A549 (cell line): ENCODE measurements at regions of chr12 and their contacts with region 1.

Region 1: GRCh38 chr12:57452937-57453509 is 2.1 kb upstream of the INHBE start:
- DNase-seq: peak; percentile 65 to 84
- ATAC-seq: peak; percentile 54 to 74
- H3K4me3 ChIP-seq: no peak overlapping the region
- H3K27ac ChIP-seq: peak overlapping the region; percentile 92 to 99
- H3K4me1 ChIP-seq: peaks cover 68% of the 10 kb centered on the region
- CTCF ChIP-seq: peak; percentile 94
- EP300 ChIP-seq: no peak
- POLR2A ChIP-seq: no peak
- RAD21 ChIP-seq: peak; percentile 98 to 99

Region 2: GRCh38 chr12:57213058-57213715 is 239.8 kb before region 1 on chr12:
- CTCF ChIA-PET with region 1: interaction called, 51 read pairs
- POLR2A ChIA-PET with region 1: no interaction called
- DNase-seq: peak; percentile 89 to 94
- ATAC-seq: peak; percentile 51 to 75
- H3K4me3 ChIP-seq: no peak overlapping the region
- H3K27ac ChIP-seq: peak overlapping the region in 1 of 2 experiments; percentile 67; a peak in 4 of 6 replicates
- H3K4me1 ChIP-seq: peaks cover 31% of the 10 kb centered on the region
- CTCF ChIP-seq: peak; percentile 90
- EP300 ChIP-seq: no peak
- POLR2A ChIP-seq: no peak
- RAD21 ChIP-seq: peak; percentile 78 to 85

Region 3: GRCh38 chr12:57280211-57281062 is 172.6 kb before region 1 on chr12:
- CTCF ChIA-PET with region 1: interaction called, 19 read pairs
- POLR2A ChIA-PET with region 1: no interaction called
- DNase-seq: peak; percentile 78 to 89
- ATAC-seq: peak; percentile 95 to 98
- H3K4me3 ChIP-seq: no peak overlapping the region
- H3K27ac ChIP-seq: peak overlapping the region; percentile 73 to 90
- H3K4me1 ChIP-seq: peaks cover 32% of the 10 kb centered on the region
- CTCF ChIP-seq: no peak
- EP300 ChIP-seq: peak in 1 of 2 experiments; percentile 45; a peak in 2 of 5 replicates
- POLR2A ChIP-seq: peak; percentile 34
- RAD21 ChIP-seq: no peak

Region 4: DNA sequence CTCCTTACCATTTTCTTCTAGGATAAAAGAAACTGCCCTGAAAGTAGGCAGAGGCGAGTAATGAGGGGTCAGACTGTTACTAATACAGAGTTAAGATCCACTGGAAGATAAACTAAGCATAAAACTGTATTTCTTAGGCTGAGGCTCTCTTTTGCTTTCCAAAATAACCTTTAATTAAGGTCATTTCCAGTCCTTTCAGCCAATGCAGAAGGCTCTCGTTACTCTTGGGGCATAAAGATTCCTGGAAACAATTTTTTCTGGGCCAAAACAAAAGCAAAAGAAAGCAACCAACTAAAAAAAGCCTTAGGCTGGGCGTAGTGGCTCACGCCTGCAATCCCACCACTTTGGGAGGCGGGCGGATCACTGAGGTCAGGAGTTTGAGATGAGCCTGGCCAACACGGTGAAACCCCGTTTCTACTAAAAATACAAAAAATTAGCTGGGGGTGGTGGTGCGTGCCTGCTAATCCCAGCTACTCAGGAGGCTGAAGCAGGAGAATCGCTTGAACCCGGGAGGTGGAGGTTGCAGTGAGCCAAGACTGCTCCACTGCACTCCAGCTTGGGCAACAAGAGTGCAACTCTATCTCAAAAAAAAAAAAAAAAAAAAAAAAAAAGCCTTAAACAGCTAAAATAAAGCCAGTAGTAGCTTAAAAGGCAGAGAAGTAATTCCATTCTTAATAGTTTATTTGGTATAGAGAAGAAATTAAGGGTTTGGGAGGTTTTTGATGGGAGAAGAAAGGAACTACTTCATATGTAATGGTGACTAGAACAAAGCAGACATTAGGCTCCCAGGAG is 133.1 kb before region 1 on chr12:
- CTCF ChIA-PET with region 1: interaction called, 459 read pairs
- POLR2A ChIA-PET with region 1: no interaction called
- DNase-seq: no peak
- ATAC-seq: 0 out of 6 replicates have a peak, but pooled peaks of 1 of the 2 experiments have one; percentile 25
- H3K4me3 ChIP-seq: no peak overlapping the region
- H3K27ac ChIP-seq: 0 out of 6 replicates have a peak overlapping the region, but pooled peaks of 1 of the 2 experiments have one; percentile 5
- H3K4me1 ChIP-seq: peaks cover 10% of the 10 kb centered on the region
- CTCF ChIP-seq: no peak
- EP300 ChIP-seq: no peak
- POLR2A ChIP-seq: no peak
- RAD21 ChIP-seq: no peak

Region 5: GRCh38 chr12:57352166-57352565 is 100.9 kb before region 1 on chr12:
- CTCF ChIA-PET with region 1: interaction called, 12 read pairs
- POLR2A ChIA-PET with region 1: no interaction called
- DNase-seq: no peak
- ATAC-seq: no peak
- H3K4me3 ChIP-seq: no peak overlapping the region
- H3K27ac ChIP-seq: no peak overlapping the region
- H3K4me1 ChIP-seq: peaks cover 6% of the 10 kb centered on the region; the same call in 1 of the 3 replicates
- CTCF ChIP-seq: no peak
- EP300 ChIP-seq: no peak
- POLR2A ChIP-seq: no peak
- RAD21 ChIP-seq: no peak

Region 6: DNA sequence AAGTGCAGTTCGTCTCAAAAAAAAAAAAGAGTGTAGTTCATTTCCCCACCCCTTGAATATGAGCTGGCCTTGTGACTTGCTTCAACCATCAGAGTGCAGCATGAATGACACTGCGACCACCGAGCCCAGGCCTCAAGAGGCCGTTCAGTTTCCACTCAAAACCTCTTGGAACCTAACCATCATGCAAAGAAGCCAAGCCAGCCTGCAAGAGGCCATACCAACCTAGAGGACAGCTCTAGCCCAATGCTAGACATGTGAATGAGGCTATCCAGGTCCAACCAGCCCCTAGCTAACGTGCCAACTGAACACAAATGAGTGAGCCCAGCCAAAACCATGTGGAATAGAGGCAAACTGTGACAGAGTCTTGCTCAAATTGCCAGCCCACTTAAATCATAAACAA is 51.9 kb before region 1 on chr12:
- CTCF ChIA-PET with region 1: interaction called, 14 read pairs
- POLR2A ChIA-PET with region 1: no interaction called
- DNase-seq: peak in 1 of 2 experiments; percentile 15
- ATAC-seq: peak in 1 of 2 experiments; percentile 34; a peak in 3 of 6 replicates
- H3K4me3 ChIP-seq: no peak overlapping the region
- H3K27ac ChIP-seq: no peak overlapping the region
- H3K4me1 ChIP-seq: no peaks in the 10 kb centered on the region
- CTCF ChIP-seq: no peak
- EP300 ChIP-seq: no peak
- POLR2A ChIP-seq: no peak
- RAD21 ChIP-seq: no peak

Region 7: DNA sequence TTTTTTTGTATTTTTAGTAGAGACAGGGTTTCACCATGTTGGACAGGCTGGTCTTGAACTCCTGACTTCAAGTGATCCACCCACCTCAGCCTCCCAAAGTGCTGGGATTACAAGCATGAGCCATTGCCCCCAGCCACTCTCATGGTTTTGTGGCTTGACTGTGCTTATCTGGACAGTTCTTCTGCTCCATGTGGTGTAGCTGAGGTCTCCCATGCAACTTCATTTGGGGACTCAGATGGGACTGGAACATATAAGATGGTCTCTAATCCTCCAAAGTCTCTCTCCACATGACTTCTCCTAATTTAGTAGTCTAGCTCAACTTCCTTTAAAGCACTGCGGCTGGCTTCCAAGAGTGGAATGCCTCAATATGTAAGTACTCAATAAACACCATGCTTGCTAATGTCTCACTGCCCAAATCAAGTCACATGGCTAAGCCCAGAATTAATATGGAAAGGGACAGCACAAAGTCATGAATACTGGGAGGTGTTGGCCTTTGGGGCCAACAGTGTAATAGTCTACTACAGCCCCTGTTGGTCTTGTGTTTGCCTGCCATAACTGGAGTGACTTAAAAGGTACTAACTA is 11.1 kb before region 1 on chr12:
- CTCF ChIA-PET with region 1: interaction called, 74 read pairs
- POLR2A ChIA-PET with region 1: no interaction called
- DNase-seq: no peak
- ATAC-seq: no peak
- H3K4me3 ChIP-seq: no peak overlapping the region
- H3K27ac ChIP-seq: no peak overlapping the region
- H3K4me1 ChIP-seq: no peaks in the 10 kb centered on the region
- CTCF ChIP-seq: no peak
- EP300 ChIP-seq: no peak
- POLR2A ChIP-seq: no peak
- RAD21 ChIP-seq: no peak

Region 8: GRCh38 chr12:57754411-57755193 is 301.6 kb after region 1 on chr12 and contains the start of gene MARCHF9:
- CTCF ChIA-PET with region 1: no interaction called
- POLR2A ChIA-PET with region 1: no interaction called
- DNase-seq: peak in 1 of 2 experiments; percentile 59
- ATAC-seq: peak; percentile 21 to 32; a peak in 3 of 6 replicates
- H3K4me3 ChIP-seq: peak within 1 kb of the TSS; percentile 77
- H3K27ac ChIP-seq: peak within 1 kb of the TSS; percentile 71 to 94
- H3K4me1 ChIP-seq: peaks cover 34% of the 10 kb centered on the region
- CTCF ChIP-seq: no peak
- EP300 ChIP-seq: no peak
- POLR2A ChIP-seq: no peak
- RAD21 ChIP-seq: no peak
- polyA plus RNA-seq, gene MARCHF9: 7.2 and 8.4 TPM in 2 replicates